Activated naive CD4-positive, alpha-beta T cell treated with anti-CD3 and anti-CD28 coated beads, Interleukin-2, amount 10 ng/mL, durations not matched to agents 7 days and 5 days (primary cell): ENCODE measurements at regions of chr20 and their contacts with region 1.

Region 1: DNA sequence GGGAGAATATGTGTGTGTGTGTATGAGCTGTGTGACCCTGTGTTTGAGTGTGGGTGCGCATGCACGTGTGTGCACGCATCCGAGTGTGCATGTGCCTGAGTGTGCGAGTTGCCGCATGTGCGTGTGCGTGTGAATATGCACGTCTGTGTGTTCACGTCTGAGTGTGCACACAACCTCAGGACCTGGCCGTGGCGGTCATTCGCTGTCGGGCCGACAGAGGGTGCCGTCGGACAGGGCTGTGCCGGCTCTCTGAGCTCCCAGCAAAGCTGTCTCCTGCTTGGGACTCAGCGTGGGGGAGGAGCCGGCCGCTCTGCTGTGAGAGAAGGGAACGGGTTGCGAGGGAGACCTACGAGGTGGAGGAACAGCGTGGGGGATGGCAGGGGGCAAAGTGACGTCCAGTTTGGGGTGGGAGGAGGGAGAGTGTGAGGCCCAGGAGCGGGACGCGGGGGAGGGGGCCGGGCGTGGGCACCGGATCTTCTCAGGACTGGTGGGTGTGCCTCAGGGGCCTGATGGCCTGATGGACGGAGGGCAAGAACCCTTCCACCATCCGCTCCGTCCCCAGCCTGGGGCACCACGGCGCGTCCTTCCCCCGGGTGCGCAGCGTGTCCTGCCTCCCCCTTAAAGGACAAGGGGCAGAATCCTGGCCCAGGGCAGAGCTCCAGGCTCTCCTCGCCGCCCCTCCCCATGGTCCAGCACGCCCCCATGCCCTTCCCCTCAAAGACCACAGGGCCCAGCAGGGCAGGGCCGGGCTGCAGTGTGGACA is 19.9 kb downstream of the SLC17A9 start:
- DNase-seq: peak; percentile 92
- H3K4me3 Mint-ChIP-seq: no peak overlapping the region
- H3K27ac Mint-ChIP-seq: no peak overlapping the region
- H3K4me1 Mint-ChIP-seq: peaks cover 24% of the 10 kb centered on the region
- H3K27me3 Mint-ChIP-seq: peaks cover 84% of the 10 kb centered on the region

Region 2: DNA sequence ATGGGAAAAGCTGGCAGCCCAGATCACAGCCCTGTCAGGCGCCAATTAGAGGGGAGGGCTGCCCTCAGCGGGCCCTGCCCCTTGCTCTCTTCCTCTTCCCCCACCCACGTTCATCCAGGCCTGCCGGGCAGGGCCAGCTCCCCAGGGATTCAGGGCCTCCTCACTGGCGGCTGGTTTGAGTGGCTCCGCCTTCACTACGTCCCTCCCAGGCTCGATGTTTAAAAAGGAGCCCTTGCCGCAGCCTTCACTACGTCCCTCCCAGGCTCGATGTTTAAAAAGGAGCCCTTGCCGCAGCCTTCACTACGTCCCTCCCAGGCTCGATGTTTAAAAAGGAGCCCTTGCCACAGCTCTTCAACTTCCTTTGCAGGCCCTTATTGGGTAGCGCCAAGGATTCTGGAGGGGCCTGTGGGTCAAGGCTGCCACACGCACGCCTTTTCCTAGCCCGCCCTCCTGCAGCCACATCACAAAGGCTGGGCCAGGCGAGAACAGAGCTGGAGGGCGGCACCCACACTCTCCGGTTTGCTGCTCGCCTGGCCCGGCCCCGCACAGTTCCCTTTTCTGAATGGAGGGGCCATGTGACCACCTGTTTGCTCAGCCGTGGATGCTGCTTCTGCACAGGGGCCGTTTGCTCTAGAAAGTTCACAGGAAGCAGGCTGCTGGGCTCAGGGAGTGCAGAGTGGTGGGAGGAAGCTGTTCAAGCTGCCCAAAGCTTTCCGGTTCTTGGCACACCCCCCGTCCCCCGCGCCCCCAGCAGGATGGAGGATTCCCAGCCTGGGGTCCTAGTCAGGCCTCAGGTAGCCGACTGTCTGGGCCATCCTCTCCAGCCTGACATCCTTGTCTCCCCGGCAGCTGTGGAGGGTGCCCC is 18.4 kb before region 1 on chr20:
- CTCF ChIA-PET with region 1: interaction called, 10 read pairs
- DNase-seq: peak; percentile 93
- H3K4me3 Mint-ChIP-seq: peak overlapping the region; percentile 80
- H3K27ac Mint-ChIP-seq: peak overlapping the region; percentile 97
- H3K4me1 Mint-ChIP-seq: peaks cover 43% of the 10 kb centered on the region
- H3K27me3 Mint-ChIP-seq: peaks cover 4% of the 10 kb centered on the region

Region 3: DNA sequence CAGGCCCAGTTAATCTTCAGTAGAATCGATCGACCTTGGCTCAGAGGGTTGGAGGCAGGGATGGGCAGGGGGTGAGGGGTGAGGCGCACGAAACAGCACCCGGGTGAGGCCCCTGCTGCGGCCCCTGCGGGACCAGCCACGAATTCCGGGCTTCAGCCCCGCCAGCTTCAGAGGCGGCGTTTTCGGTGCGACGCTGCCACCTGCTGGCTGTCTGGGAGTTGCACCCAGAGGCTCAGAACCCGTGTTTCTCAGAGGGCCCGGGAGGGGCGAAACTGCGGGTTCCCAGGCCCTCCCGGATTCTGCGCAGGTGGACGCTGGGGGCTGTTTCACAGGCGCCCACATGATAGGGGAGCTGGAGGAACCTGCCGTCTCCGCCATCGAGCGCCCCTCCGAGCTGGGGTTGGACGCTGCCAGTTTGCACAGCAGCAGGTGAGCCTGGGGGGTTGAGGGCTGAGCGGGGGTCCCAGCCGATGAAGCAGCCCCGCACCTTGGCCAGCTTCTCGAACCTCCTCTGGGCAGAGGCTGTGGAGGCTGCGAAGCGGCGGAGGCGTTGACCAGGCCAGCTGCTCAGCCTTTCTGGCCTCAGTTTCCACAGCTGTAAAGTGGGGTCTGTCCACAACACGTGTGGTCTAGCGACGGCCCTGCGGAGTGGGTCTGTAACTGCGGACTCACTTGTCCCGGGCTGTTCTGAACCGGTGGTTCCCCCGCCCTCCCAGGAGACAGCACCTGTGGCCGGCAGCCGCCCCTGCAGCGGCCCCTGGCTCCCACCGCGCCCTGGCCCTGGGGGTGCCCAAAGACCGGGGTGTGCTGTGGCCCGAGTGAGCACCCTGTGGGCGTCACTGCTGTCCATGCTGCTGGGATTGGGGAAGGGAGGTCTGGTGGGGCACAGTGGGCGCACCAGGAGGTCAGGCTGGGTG is 36.9 kb after region 1 on chr20:
- CTCF ChIA-PET with region 1: interaction called, 19 read pairs
- DNase-seq: peak; percentile 88
- H3K4me3 Mint-ChIP-seq: no peak overlapping the region
- H3K27ac Mint-ChIP-seq: peak overlapping the region; percentile 65
- H3K4me1 Mint-ChIP-seq: peaks cover 21% of the 10 kb centered on the region
- H3K27me3 Mint-ChIP-seq: peaks cover 99% of the 10 kb centered on the region

Region 4: DNA sequence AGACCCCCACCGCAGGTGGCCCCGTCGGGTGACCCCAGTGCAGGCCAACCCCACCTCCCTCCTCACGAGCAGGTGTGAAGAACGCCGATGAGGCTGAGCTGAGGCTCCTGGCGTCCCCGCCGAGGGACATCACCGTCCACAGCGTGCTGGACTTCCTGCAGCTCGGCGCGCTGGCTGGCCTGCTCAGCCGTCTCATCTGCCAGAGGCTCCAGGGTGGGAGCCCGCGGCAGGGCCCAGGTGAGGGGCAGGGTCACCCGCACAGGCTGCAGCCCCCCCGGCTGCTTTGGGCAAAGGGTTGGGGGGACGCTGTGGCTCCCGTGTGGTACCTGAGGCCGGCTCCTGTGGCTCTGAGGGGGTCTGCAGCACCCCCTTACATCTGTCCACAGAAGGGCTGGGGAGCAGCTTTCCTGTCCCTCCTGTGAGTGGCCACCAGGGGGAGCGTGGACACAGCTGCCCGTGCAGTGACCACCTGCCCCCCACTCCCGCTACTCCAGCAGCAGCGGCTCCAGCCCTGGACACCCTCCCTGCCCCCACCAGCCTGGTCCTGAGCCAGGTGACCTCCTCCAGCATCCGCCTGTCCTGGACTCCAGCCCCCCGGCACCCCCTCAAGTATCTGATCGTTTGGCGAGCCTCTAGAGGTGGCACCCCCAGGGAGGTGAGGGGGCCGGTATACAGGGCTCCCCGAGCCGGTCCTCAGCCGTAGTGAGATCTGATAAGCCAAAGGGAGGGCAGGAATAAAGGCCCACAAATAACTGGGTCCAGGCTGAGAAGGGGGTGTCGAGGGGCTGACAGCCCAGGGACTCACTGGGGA is 337.0 kb after region 1 on chr20:
- CTCF ChIA-PET with region 1: no interaction called
- DNase-seq: peak; percentile 52
- H3K4me3 Mint-ChIP-seq: no peak overlapping the region
- H3K27ac Mint-ChIP-seq: no peak overlapping the region
- H3K4me1 Mint-ChIP-seq: no peaks in the 10 kb centered on the region
- H3K27me3 Mint-ChIP-seq: no peaks in the 10 kb centered on the region